MCF 10A (cell line): ENCODE measurements at regions of chr14 and their contacts with region 1.

Region 1: DNA sequence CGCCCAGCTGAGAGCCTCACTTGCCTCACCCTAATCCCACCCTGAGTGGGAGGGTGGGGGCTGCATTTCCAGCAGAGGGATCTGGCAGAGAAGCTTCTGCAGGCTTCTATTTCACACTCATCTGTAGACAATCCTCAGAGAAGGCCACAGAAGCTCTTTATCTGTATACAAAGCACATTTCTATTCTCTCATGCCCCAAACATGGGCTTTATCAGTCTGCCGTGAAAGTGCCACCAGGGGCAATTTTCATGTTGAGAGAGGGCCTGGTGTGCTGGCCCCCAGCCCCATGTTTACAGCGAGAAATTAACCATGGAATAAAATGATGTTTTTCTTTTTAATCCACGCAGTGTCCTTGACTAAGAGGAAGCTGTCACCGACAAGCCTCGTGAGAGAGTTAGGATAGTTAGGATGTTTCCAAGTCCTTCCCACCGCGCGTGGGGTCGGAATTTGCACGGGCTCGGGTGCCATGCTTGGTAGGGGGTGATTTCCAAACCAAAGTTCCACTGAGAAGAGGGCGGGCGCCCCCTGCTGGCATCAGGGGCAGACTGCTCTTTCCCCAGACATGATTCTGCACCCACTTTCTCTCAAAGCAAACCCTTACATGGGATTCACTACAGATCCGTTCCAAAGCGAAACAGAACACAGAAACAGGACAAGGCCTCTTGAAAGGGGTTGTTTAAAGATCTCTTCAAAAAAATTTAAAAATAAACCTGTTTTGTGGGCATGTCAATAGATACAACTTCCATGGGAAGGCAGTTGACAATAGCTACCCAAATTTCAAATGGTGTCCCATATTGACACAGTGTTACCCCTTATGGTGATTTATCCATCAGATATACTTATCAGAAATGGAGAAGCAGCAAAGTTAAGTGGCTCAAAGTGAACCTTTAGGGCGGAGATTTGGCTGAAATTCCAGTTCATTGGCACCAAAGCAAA is 19.4 kb downstream of the BDKRB1 start:
- DNase-seq: peak; percentile 70
- H3K4me3 Mint-ChIP-seq: no peak overlapping the region
- H3K27ac Mint-ChIP-seq: no peak overlapping the region
- H3K4me1 Mint-ChIP-seq: peaks cover 11% of the 10 kb centered on the region
- H3K27me3 Mint-ChIP-seq: no peaks in the 10 kb centered on the region
- CTCF ChIP-seq: peak; percentile 94

Region 2: GRCh38 chr14:95248432-95248831 is 1027.0 kb before region 1 on chr14:
- CTCF ChIA-PET with region 1: no interaction called
- POLR2A ChIA-PET with region 1: no interaction called
- intact Hi-C with region 1: no loop called
- DNase-seq: no peak
- H3K4me3 Mint-ChIP-seq: no peak overlapping the region
- H3K27ac Mint-ChIP-seq: no peak overlapping the region
- H3K4me1 Mint-ChIP-seq: peaks cover 16% of the 10 kb centered on the region
- H3K27me3 Mint-ChIP-seq: no peaks in the 10 kb centered on the region
- CTCF ChIP-seq: no peak

Region 3: GRCh38 chr14:95561001-95561412 is 714.4 kb before region 1 on chr14:
- CTCF ChIA-PET with region 1: interaction called, 3 read pairs
- POLR2A ChIA-PET with region 1: no interaction called
- intact Hi-C with region 1: loop called (anchors 10 kb)
- DNase-seq: peak; percentile 88
- H3K4me3 Mint-ChIP-seq: no peak overlapping the region
- H3K27ac Mint-ChIP-seq: no peak overlapping the region
- H3K4me1 Mint-ChIP-seq: no peaks in the 10 kb centered on the region
- H3K27me3 Mint-ChIP-seq: peaks cover 18% of the 10 kb centered on the region
- CTCF ChIP-seq: peak; percentile 96

Region 4: DNA sequence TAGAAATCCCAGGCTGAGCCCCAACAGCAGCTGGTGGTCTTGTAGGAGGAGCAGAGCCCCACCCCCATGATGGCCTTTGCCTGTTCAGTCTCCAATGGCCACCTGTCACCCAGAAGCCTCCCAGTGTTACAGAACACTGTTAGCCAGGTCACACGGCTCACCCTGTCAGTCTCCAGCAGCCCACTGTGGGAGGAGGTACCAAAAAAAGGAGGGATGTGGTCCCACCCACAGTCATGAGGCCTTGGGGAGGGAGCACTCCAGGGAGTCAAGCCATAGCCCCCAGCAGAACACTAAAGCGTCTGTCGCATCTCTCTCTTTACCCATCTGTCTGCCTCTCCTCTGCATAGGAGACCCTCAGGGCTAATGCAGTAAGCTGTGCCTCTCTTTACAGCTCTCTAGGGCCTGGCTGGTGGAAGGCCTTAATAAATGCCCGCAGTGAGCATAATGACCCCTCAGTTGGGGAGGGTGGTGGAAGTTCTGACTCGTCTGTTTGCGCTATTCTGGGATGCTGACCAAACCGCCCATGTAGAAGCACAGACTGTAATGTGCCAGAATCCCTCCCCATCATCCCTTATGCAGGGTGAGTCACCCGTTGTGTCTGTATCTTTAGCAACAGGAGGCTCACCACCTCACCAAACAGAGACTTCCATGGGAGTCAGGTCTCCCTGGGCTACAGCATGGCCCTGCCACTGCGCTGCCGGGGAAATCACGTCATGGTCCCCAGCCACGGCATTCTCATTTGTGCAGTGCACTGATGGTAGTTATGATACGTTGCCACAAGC is 221.7 kb before region 1 on chr14:
- CTCF ChIA-PET with region 1: interaction called, 42 read pairs
- POLR2A ChIA-PET with region 1: no interaction called
- intact Hi-C with region 1: loop called (anchors 2 kb)
- DNase-seq: peak; percentile 57
- H3K4me3 Mint-ChIP-seq: no peak overlapping the region
- H3K27ac Mint-ChIP-seq: no peak overlapping the region
- H3K4me1 Mint-ChIP-seq: peaks cover 5% of the 10 kb centered on the region
- H3K27me3 Mint-ChIP-seq: peaks cover 26% of the 10 kb centered on the region
- CTCF ChIP-seq: no peak

Region 5: DNA sequence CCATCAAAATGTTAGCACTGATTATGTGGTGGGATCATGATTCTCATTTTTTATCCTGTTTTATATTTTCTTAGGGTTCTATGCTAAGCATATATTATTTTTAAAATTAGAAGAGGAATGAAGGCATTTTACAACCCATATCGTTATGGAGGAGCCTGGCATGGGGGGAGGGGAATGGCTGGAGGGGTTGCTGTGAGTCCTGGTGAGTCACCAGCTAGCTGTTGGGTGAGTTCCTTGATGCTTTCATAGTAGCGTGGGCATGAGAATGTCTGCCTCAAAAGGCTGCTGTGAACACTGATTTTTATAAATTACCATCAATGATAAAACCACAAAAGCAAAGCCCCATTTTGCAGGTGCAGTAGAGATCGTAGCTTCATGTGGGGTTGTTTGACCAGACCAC is 189.4 kb before region 1 on chr14:
- CTCF ChIA-PET with region 1: interaction called, 12 read pairs
- POLR2A ChIA-PET with region 1: no interaction called
- intact Hi-C with region 1: no loop called
- DNase-seq: peak; percentile 84
- H3K4me3 Mint-ChIP-seq: peak overlapping the region; percentile 22
- H3K27ac Mint-ChIP-seq: peak overlapping the region; percentile 92
- H3K4me1 Mint-ChIP-seq: peaks cover 38% of the 10 kb centered on the region
- H3K27me3 Mint-ChIP-seq: no peaks in the 10 kb centered on the region
- CTCF ChIP-seq: no peak

Region 6: DNA sequence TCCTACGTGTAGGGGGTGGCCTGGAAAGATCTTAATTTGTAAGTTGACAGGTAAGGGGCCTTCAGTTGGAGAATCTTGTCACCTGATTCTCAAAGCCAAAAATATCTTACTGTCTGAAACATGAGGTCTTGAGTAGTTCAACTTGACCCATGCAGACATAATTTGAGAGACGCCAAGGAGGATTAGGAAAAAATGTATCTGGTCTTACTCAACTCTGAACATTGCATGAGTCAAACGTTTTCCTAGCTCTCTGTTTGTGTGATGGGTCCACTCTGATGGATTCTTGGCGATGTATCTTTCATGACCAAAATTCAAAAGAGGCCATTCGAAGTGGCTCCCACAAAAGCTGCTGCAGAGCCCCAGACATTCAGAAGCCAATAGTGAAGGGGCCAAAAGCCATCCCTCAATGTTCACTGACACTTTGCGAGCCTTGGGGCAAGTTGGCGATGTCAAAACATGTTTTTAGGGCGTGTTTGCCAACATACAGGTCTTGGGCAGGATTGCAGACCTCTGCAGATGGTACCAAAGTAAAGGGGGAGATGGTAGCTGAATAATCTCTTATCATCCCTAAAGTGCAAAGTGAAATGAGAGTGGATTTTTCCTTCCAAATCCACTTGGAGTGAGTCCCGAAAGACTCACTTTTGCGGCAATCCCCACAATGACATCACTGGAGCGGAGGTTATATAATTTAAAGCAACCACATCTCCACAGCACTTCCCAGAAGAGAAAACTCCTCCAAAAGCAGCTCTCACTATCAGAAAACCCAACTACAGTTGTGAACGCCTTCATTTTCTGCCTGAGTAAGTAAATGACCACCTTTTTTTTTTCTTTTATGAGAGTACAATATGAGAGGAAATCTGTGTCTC is 19.7 kb before region 1 on chr14 and contains the start of gene BDKRB1:
- CTCF ChIA-PET with region 1: interaction called, 18 read pairs
- POLR2A ChIA-PET with region 1: interaction called, 4 read pairs
- intact Hi-C with region 1: no loop called
- DNase-seq: peak; percentile 86
- H3K4me3 Mint-ChIP-seq: peak within 1 kb of the TSS; percentile 39
- H3K27ac Mint-ChIP-seq: peak within 1 kb of the TSS; percentile 39
- H3K4me1 Mint-ChIP-seq: peaks cover 36% of the 10 kb centered on the region
- H3K27me3 Mint-ChIP-seq: no peaks in the 10 kb centered on the region
- CTCF ChIP-seq: no peak
- total RNA-seq, gene BDKRB1: 0.32 and 0.51 TPM in 2 replicates

Region 7: GRCh38 chr14:96261772-96262655 is 13.4 kb before region 1 on chr14:
- CTCF ChIA-PET with region 1: interaction called, 18 read pairs
- POLR2A ChIA-PET with region 1: interaction called, 3 read pairs
- intact Hi-C with region 1: no loop called
- DNase-seq: no peak
- H3K4me3 Mint-ChIP-seq: no peak overlapping the region
- H3K27ac Mint-ChIP-seq: no peak overlapping the region
- H3K4me1 Mint-ChIP-seq: peaks cover 23% of the 10 kb centered on the region
- H3K27me3 Mint-ChIP-seq: no peaks in the 10 kb centered on the region
- CTCF ChIP-seq: no peak

Region 8: GRCh38 chr14:96681829-96682228 is 406.4 kb after region 1 on chr14:
- CTCF ChIA-PET with region 1: no interaction called
- POLR2A ChIA-PET with region 1: no interaction called
- intact Hi-C with region 1: no loop called
- DNase-seq: peak; percentile 49
- H3K4me3 Mint-ChIP-seq: no peak overlapping the region
- H3K27ac Mint-ChIP-seq: no peak overlapping the region
- H3K4me1 Mint-ChIP-seq: no peaks in the 10 kb centered on the region
- H3K27me3 Mint-ChIP-seq: peaks cover 35% of the 10 kb centered on the region
- CTCF ChIP-seq: no peak